Ovary (tissue), 10 donors: ENCODE measurements at regions of chr18 and their contacts with region 1.

Region 1: GRCh38 chr18:46660955-46661749 is 4.1 kb upstream of the LOXHD1 start:
- DNase-seq: no peak
- H3K4me3 ChIP-seq: no peak overlapping the region
- H3K27ac ChIP-seq: no peak overlapping the region
- H3K4me1 ChIP-seq: no peaks in the 10 kb centered on the region
- H3K27me3 ChIP-seq: no peaks in the 10 kb centered on the region
- CTCF ChIP-seq: no peak
- EP300 ChIP-seq: no peak
- POLR2A ChIP-seq: no peak

Region 2: GRCh38 chr18:46148810-46149209 is 512.3 kb before region 1 on chr18:
- intact Hi-C with region 1: loop called in 3 of 4 experiments (anchors 5 to 10 kb)
- DNase-seq: peak in 1 of 5 donors; percentile 39
- H3K4me3 ChIP-seq: no peak overlapping the region
- H3K27ac ChIP-seq: no peak overlapping the region
- H3K4me1 ChIP-seq: no peaks in the 10 kb centered on the region
- H3K27me3 ChIP-seq: no peaks in the 10 kb centered on the region
- CTCF ChIP-seq: peak; percentile 9 to 41 (median 26)
- EP300 ChIP-seq: no peak
- POLR2A ChIP-seq: no peak

Region 3: DNA sequence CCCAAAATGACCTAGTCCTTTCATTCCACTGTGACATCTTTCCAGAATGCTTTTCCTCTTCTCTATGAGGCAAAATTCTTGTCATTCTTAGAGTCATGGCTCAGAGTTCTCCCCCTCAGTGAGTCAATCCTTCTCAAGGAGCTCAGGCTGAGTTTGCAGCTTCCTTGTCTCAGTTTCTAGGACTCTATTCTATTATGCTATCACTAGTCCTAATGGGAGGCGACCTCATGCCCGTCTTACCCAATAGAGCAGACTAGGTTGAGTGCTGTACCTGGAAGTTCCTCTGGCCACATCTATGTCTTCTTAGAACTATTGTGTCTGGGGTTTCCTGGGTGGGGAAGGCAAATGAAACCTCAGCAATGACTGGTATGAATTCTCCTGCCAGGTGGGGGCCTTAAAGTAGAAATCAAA is 505.5 kb before region 1 on chr18:
- intact Hi-C with region 1: loop called in 2 of 4 experiments (anchors 5 to 10 kb)
- DNase-seq: no peak
- H3K4me3 ChIP-seq: no peak overlapping the region
- H3K27ac ChIP-seq: no peak overlapping the region
- H3K4me1 ChIP-seq: no peaks in the 10 kb centered on the region
- H3K27me3 ChIP-seq: no peaks in the 10 kb centered on the region
- CTCF ChIP-seq: no peak
- EP300 ChIP-seq: no peak
- POLR2A ChIP-seq: no peak

Region 4: GRCh38 chr18:46173393-46174341 is 487.5 kb before region 1 on chr18:
- intact Hi-C with region 1: loop called in 2 of 4 experiments (anchors 10 kb)
- DNase-seq: peak; percentile 86 to 93 (median 89)
- H3K4me3 ChIP-seq: peak overlapping the region; percentile 93
- H3K27ac ChIP-seq: peak overlapping the region; percentile 23 to 70
- H3K4me1 ChIP-seq: peaks cover 4% of the 10 kb centered on the region
- H3K27me3 ChIP-seq: no peaks in the 10 kb centered on the region
- CTCF ChIP-seq: peak; percentile 57 to 77 (median 62)
- EP300 ChIP-seq: no peak
- POLR2A ChIP-seq: peak; percentile 23

Region 5: GRCh38 chr18:46281185-46282176 is 379.7 kb before region 1 on chr18:
- intact Hi-C with region 1: loop called in 3 of 4 experiments (anchors 5 to 10 kb)
- DNase-seq: peak; percentile 24 to 76 (median 49)
- H3K4me3 ChIP-seq: no peak overlapping the region
- H3K27ac ChIP-seq: no peak overlapping the region
- H3K4me1 ChIP-seq: no peaks in the 10 kb centered on the region
- H3K27me3 ChIP-seq: no peaks in the 10 kb centered on the region
- CTCF ChIP-seq: peak; percentile 15 to 48 (median 43)
- EP300 ChIP-seq: no peak
- POLR2A ChIP-seq: no peak

Region 6: DNA sequence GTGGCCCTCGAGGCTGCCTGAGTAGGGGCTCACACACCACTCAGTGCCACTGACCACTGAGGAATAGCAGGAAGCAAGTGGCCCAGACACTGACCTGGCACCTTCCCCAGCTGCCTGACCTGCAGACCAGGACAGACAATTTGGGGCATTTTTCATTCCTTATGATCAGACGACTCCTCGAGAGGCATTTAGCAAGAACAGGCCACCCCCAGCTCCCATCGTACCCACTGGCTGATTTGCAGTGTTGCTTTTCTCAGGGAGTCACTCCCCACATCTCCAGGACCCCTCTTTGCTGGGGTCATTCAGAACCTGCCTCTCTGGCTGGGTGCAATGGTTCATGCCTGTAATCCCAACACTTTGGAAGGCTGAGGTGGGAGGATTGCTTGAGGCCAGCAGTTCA is 371.2 kb before region 1 on chr18:
- intact Hi-C with region 1: loop called in 1 of 4 experiments (anchors 5 kb)
- DNase-seq: no peak
- H3K4me3 ChIP-seq: no peak overlapping the region
- H3K27ac ChIP-seq: no peak overlapping the region
- H3K4me1 ChIP-seq: no peaks in the 10 kb centered on the region
- H3K27me3 ChIP-seq: no peaks in the 10 kb centered on the region
- CTCF ChIP-seq: no peak
- EP300 ChIP-seq: no peak
- POLR2A ChIP-seq: no peak

Region 7: GRCh38 chr18:46411867-46412690 is 249.1 kb before region 1 on chr18:
- intact Hi-C with region 1: no loop called
- DNase-seq: peak; percentile 32 to 74 (median 55)
- H3K4me3 ChIP-seq: no peak overlapping the region
- H3K27ac ChIP-seq: no peak overlapping the region
- H3K4me1 ChIP-seq: peaks cover 14% of the 10 kb centered on the region
- H3K27me3 ChIP-seq: no peaks in the 10 kb centered on the region
- CTCF ChIP-seq: no peak
- EP300 ChIP-seq: no peak
- POLR2A ChIP-seq: no peak